ENCODE measurements at regions of chr11 and their contacts with region 1.

Region 1: GRCh38 chr11:67572747-67573419 is 10.7 kb upstream of the GSTP1 start:
- DNase-seq: peak; percentile 51
- H3K4me3 ChIP-seq: no peak overlapping the region
- H3K27ac ChIP-seq: peak overlapping the region; percentile 55
- H3K4me1 ChIP-seq: peaks cover 24% of the 10 kb centered on the region
- H3K27me3 ChIP-seq: no peaks in the 10 kb centered on the region
- CTCF ChIP-seq: peak; percentile 65 to 80
- POLR2A ChIP-seq: no peak

Region 2: GRCh38 chr11:67583247-67584204 is 10.6 kb after region 1 on chr11 and contains the start of gene GSTP1:
- CTCF ChIA-PET with region 1: interaction called, 17 read pairs
- POLR2A ChIA-PET with region 1: no interaction called
- dilution Hi-C with region 1: no loop called
- intact Hi-C with region 1: loop called (anchors 1 kb)
- DNase-seq: peak; percentile 94
- H3K4me3 ChIP-seq: peak within 1 kb of the TSS; percentile 68 to 85 (median 83)
- H3K27ac ChIP-seq: peak within 1 kb of the TSS; percentile 63
- H3K4me1 ChIP-seq: peaks cover 17% of the 10 kb centered on the region
- H3K27me3 ChIP-seq: peaks cover 2 to 4% of the 10 kb centered on the region in 2 experiments
- CTCF ChIP-seq: peak; percentile 68 to 84
- POLR2A ChIP-seq: peak; percentile 99
- total RNA-seq, gene GSTP1: 962 and 997 TPM in 2 replicates

Region 3: DNA sequence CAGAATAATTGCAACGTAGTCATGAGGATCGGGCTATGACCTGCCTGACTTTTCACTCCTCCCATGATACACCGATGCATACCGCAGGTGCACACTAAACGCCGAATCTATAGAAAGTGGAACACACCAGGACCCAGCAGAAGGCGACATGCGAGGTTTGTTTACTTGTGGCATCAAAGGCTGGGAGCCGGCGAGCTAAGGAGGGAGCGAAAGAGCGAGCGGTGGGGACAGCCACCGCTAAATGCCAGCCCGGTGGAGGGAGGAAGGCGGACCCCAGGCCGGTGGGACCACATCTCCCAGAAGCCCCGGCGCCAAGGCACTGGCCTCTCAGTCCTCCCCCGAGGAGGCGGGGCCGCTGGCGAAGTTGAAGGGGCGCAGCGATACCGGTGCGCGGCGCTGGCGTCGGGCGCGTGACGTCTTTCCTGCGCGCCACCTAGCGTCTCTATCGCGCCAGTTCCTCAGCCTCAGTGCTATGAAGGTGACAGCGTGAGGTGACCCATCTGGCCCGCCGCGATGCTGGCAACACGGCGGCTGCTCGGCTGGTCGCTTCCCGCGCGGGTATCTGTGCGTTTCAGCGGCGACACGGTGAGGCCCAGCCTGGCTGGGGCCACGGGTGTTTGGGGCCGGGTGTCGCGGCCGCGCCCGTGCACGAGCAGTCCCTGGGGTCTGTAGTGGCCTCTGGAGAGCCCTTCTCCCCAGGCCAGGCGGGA is 33.8 kb after region 1 on chr11 and contains the start of gene NDUFV1:
- CTCF ChIA-PET with region 1: interaction called, 5 read pairs
- POLR2A ChIA-PET with region 1: no interaction called
- dilution Hi-C with region 1: no loop called
- intact Hi-C with region 1: loop called (anchors 2 kb)
- DNase-seq: peak; percentile 94
- H3K4me3 ChIP-seq: peak within 1 kb of the TSS; percentile 32 to 92 (median 61)
- H3K27ac ChIP-seq: peak within 1 kb of the TSS; percentile 25
- H3K4me1 ChIP-seq: peaks cover 6% of the 10 kb centered on the region
- H3K27me3 ChIP-seq: no peaks in the 10 kb centered on the region
- CTCF ChIP-seq: peak; percentile 48 to 78
- POLR2A ChIP-seq: peak; percentile 88
- total RNA-seq, gene NDUFV1: 179 and 191 TPM in 2 replicates

Region 4: GRCh38 chr11:67613960-67614715 is 41.3 kb after region 1 on chr11:
- CTCF ChIA-PET with region 1: interaction called, 15 read pairs
- POLR2A ChIA-PET with region 1: no interaction called
- dilution Hi-C with region 1: no loop called
- intact Hi-C with region 1: no loop called
- DNase-seq: peak; percentile 25
- H3K4me3 ChIP-seq: no peak overlapping the region
- H3K27ac ChIP-seq: no peak overlapping the region
- H3K4me1 ChIP-seq: no peaks in the 10 kb centered on the region
- H3K27me3 ChIP-seq: peaks cover 14 to 21% of the 10 kb centered on the region in 2 experiments
- CTCF ChIP-seq: peak; percentile 63 to 92
- POLR2A ChIP-seq: no peak

Region 5: DNA sequence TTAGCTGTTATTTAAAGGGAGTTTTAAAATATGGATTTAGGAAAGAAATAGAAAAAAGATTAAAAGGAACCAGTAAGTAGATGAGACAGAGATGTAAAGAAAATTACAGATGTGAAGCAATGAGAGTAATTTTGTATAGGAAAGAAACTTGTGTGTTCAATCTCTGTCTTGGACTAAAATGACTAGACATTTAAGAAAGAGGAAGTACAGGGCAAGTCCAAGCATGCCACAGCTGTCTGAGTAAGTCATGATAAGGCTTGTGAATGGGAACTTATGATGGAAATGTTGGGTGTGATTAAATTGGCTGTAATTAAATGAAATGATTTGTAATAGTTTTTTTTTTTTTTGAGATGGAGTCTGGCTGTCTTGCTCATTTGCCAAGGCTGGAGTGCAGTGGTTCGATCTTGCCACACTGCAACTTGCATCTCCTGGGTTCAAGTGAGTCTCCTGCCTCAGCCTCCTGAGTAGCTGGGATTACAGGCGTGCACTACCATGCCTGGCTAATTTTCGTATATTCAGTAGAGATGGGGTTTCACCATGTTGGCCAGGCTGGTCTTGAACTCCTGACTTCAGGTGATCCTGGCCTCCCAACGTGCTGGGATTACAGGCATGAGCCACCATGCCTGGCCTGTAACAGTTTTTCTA is 83.5 kb after region 1 on chr11:
- CTCF ChIA-PET with region 1: interaction called, 14 read pairs
- POLR2A ChIA-PET with region 1: no interaction called
- dilution Hi-C with region 1: no loop called
- intact Hi-C with region 1: no loop called
- DNase-seq: peak; percentile 46
- H3K4me3 ChIP-seq: no peak overlapping the region
- H3K27ac ChIP-seq: no peak overlapping the region
- H3K4me1 ChIP-seq: no peaks in the 10 kb centered on the region
- H3K27me3 ChIP-seq: no peaks in the 10 kb centered on the region
- CTCF ChIP-seq: no peak
- POLR2A ChIP-seq: no peak

Measured in endothelial cell of umbilical vein (primary cell).